AG04450 (cell line): ENCODE measurements at regions of chr2 and their contacts with region 1.

Region 1: DNA sequence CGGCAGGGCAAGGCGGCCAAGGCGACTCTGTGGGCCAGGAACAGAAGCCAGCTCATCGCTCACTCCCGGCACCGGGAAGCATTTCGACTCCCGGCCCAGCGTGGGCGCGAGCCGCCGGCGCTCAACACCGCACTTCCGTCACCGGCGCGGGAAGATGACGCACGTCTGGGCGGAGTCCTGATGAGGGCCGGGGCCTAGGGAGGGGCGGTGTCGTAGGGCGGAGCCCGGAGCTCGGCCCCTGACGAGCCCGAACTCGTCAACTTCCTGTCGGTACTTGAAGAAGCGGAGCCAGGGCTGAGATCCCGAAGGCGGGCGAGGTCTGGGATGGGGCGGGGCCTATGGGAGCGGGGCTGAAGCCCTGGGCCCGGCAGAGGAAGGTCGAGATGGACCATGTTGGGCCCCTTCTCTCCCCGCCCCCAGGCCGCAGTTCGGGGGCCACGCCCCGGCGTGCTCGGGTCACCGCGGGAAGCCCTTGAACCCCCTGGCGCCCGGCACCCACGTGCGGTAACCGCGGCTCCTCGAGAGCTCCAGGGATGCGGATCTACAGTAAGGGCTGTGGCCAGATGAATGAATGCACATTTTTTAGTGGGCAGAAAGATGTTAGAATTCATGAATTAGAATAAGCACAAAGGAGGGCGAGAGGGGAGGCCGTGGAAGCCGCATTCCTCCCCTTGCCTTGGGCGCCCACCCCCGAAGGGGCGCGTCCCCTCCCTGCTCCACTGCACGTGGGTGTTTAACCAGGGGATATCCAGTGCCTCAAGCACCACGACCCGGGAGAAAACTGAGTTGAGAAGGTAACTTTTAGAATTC is at the start of gene RNASEH1:
- DNase-seq: peak; percentile 97
- H3K4me3 ChIP-seq: peak within 1 kb of the TSS; percentile 88
- H3K27ac ChIP-seq: peak within 1 kb of the TSS; percentile 91
- H3K27me3 ChIP-seq: no peaks in the 10 kb centered on the region
- CTCF ChIP-seq: no peak
- polyA plus RNA-seq, gene RNASEH1: 23.7 and 26.2 TPM in 2 replicates

Region 2: DNA sequence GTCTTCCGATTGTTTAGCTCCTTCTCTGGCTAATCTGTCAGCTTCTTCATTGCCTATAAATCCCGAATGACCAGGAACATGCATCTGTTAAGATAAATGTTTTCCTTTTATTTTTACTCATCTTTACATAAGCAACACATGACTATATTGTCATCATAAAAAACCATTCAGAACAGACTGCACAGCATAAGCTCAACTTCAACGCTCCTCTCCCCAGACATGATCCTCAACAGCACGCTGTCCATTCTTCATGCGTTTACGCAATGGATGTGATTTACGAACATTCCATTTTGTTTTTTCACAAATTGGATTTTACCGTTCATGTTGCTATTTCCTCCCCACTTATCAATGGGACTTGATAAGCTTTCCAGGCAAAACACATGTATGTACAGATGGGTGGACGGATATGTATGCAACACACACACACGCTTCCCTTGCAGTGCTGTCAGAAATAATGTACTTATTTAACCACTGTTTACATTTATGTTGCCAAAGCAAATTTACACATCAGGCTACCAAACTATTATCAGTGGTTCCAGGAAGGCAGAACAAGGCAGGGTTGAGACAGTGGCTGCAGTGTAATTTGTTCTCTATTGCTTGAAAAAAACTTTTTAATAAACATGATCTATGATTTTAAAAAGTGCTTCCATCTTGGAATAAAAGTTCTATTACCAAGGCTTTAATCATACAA is 12.5 kb before region 1 on chr2:
- CTCF ChIA-PET with region 1: no interaction called
- POLR2A ChIA-PET with region 1: interaction called, 11 read pairs
- DNase-seq: no peak
- H3K4me3 ChIP-seq: no peak overlapping the region
- H3K27ac ChIP-seq: no peak overlapping the region
- H3K27me3 ChIP-seq: no peaks in the 10 kb centered on the region
- CTCF ChIP-seq: no peak

Region 3: GRCh38 chr2:3575534-3576262 is 17.3 kb after region 1 on chr2:
- CTCF ChIA-PET with region 1: no interaction called
- POLR2A ChIA-PET with region 1: interaction called, 14 read pairs
- DNase-seq: no peak
- H3K4me3 ChIP-seq: peak overlapping the region; percentile 97
- H3K27ac ChIP-seq: peak overlapping the region; percentile 70
- H3K27me3 ChIP-seq: no peaks in the 10 kb centered on the region
- CTCF ChIP-seq: no peak